Left ventricle myocardium superior (tissue), 1 donor: ENCODE measurements at regions of chr5 and their contacts with region 1.

Region 1: GRCh38 chr5:112757468-112758208 is 20.0 kb downstream of the APC start:
- DNase-seq: no peak
- ATAC-seq: peak; percentile 79

Region 2: GRCh38 chr5:112551419-112552032 is 206.1 kb before region 1 on chr5:
- intact Hi-C with region 1: loop called (anchors 2 kb)
- DNase-seq: no peak
- ATAC-seq: peak; percentile 60

Region 3: DNA sequence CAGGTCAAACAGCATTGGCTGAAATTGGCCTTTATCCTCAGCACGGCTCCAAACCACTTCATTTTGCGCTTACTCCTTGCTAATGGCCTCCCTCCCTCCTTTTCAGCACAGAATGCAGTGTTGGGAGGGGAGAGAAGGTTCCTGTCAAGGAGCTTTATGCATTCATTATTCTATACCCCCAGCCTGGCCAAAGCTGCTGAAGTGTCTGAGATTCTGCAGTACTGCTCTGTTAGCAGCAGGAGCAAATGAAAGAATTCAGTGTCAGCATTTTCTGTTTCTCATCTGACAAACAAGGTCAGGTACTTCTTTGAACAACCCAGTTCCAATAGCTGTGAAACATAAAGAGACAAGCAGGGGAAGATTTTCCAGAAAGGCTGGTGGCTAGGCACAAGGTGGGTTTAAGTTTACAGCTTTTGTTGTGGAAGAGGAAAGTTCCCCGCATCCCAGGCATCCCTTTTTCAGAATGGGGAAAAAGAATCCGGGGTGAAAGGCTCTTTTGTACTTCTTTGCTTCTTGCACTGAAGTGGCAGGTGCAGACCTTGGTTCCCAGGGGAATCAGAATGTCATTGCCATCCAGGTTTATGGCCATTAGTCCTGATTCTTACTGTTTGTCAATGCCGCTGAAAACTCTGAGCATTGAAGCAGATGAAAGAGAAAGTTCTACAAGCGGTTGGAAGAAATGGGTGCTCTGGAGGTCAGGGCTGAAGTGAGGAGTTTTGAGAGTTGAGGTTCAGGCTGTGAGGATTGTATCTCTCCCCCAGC is 129.2 kb before region 1 on chr5:
- intact Hi-C with region 1: no loop called
- DNase-seq: no peak
- ATAC-seq: no peak